Upper lobe of right lung (tissue), 1 donor: ENCODE measurements at regions of chr21 and their contacts with region 1.

Region 1: GRCh38 chr21:45554477-45555175 is 12.4 kb upstream of the SLC19A1 start:
- DNase-seq: peak; percentile 93
- ATAC-seq: peak; percentile 85
- H3K4me3 ChIP-seq: peak overlapping the region; percentile 65
- H3K27ac ChIP-seq: peak overlapping the region; percentile 73
- H3K4me1 ChIP-seq: peaks cover 11% of the 10 kb centered on the region
- H3K27me3 ChIP-seq: no peaks in the 10 kb centered on the region
- CTCF ChIP-seq: peak; percentile 77

Region 2: DNA sequence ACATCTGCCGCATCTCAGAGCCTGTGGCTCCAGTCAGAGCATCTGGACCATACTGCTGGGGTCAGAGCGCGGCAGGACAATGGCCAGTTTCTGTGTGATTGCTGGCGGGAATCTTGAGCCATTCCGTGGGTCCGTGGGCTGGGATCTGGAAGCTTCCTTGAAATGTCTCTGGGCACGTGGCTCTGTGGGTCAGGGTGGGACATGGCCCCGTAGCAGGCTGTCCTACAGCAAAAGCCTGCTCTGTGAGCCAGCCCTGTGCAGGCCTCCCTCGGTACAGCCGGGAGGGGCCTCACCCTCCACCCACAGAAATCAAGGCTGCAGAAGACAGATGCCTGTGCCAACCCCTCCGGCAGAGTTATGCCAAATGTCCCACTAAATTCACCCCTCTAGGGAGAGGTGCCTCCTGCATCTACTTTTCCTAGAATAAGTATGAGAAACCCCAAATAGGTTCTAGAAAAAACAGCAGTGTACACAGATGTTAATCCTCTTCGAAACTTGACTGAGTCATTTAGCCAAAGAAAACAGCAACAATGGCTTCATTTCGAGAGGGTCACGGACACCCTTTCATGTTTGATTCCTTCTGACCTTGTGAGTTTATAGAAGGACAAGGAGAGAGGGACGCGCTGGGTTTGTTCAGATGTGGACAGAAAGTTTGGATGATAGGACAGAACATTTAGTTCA is 121.9 kb before region 1 on chr21:
- intact Hi-C with region 1: no loop called
- DNase-seq: no peak
- ATAC-seq: no peak
- H3K4me3 ChIP-seq: no peak overlapping the region
- H3K27ac ChIP-seq: no peak overlapping the region
- H3K4me1 ChIP-seq: no peaks in the 10 kb centered on the region
- H3K27me3 ChIP-seq: no peaks in the 10 kb centered on the region
- CTCF ChIP-seq: no peak

Region 3: DNA sequence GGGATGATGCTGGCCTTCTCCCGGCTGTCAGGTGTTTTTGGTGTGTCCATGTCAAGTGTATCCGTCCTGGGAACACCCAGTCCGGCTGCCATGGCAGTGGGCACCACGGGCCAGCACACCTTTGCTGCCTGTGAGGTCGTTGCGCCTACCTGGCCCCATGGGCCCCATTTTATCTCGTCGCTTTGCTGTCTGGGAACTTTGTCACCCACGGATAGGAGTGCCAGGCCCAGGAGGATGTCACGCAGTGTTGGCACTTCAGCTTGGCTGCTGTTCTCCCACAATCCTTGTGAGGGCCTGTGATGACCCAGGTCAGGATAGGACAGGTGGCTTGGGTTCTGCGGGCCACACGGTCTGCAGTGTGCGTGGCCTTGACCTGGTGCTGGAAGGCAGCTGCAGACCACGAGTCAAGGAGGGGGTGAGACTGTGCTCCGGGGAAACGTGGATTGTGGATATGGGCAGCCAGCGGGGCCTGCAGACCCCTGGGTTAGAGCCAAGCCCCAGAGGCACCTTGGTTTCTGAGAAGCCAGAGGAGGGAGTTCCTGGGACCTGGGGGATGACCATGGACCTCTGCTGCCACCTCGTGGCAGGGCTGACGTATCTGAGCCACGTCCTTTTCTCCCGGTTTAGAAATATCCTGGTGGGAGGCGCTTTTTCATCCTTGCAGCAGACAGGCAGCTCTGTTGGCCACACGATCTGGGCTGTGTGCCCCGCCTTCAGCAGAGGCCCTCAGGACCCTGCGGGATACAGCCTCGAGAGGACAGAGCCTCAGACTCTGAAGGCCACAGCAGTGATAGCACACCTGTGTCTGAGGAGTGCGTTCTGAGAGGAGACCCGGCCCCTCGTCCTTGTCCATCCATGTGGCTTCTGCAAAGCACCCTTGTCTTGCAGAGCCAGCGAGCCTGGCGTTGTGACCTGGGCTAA is 265.8 kb after region 1 on chr21:
- intact Hi-C with region 1: loop called (anchors 10 kb)
- DNase-seq: peak; percentile 87
- ATAC-seq: peak; percentile 91
- H3K4me3 ChIP-seq: no peak overlapping the region
- H3K27ac ChIP-seq: no peak overlapping the region
- H3K4me1 ChIP-seq: no peaks in the 10 kb centered on the region
- H3K27me3 ChIP-seq: no peaks in the 10 kb centered on the region
- CTCF ChIP-seq: peak; percentile 72